Activated CD4-positive, alpha-beta T cell treated with anti-CD3 and anti-CD28 coated beads for 36 hours (primary cell): ENCODE measurements at regions of chr22 and their contacts with region 1.

Region 1: GRCh38 chr22:43993027-43993760 is 30.9 kb upstream of the PARVB start:
- DNase-seq: peak; percentile 74
- ATAC-seq: peak; percentile 74
- H3K4me3 Mint-ChIP-seq: no peak overlapping the region
- H3K27ac Mint-ChIP-seq: no peak overlapping the region
- H3K4me1 Mint-ChIP-seq: peaks cover 29% of the 10 kb centered on the region
- H3K27me3 Mint-ChIP-seq: no peaks in the 10 kb centered on the region

Region 2: DNA sequence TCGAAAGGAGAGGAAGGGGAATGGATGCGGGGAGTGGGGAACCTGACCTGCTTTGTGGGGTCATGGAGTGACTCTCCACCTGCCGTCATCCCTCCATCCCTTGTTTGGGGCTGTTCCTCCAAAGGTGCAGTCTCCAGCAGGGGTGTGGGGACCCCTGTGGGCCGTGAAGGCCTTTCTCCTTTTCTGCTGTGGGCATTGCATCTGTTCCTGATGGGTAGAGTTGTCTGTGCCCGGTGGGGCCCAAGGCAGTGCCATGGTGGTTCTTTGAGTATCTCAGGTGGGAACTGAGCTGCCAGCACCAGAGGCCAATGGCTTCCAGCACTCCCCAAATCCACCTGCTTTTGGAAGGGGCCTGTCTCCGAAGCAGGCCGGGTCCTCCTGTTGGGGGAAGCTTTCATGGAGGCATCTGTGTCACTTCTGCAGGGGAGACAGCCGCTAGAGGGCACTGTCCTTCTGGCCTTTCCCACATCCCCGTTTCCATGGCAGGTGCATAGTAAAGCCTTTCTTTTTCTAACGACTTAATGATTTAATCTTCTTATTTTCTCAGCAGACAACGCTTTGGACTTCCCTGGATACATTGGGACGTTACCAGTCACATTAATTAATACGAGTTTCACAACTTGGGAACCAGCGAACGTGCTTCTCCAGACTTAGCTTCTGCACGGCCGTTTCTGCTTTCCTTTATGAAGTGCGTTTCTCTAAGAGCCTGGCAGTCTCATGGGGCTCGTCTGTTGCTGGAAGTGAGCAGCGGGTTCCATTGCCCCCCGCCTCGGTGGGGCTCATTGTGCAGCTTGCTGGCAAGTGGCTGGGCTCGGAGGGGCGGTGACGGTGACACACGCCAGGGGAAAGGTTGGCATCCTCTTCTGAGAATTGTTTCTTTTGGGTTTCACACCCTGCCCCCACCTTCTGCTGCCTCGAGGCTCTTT is 88.0 kb after region 1 on chr22:
- CTCF ChIA-PET with region 1: interaction called, 56 read pairs
- POLR2A ChIA-PET with region 1: interaction called, 3 read pairs
- intact Hi-C with region 1: loop called (anchors 1 to 5 kb)
- DNase-seq: peak; percentile 85
- ATAC-seq: peak; percentile 68
- H3K4me3 Mint-ChIP-seq: no peak overlapping the region
- H3K27ac Mint-ChIP-seq: no peak overlapping the region
- H3K4me1 Mint-ChIP-seq: no peaks in the 10 kb centered on the region
- H3K27me3 Mint-ChIP-seq: no peaks in the 10 kb centered on the region

Region 3: DNA sequence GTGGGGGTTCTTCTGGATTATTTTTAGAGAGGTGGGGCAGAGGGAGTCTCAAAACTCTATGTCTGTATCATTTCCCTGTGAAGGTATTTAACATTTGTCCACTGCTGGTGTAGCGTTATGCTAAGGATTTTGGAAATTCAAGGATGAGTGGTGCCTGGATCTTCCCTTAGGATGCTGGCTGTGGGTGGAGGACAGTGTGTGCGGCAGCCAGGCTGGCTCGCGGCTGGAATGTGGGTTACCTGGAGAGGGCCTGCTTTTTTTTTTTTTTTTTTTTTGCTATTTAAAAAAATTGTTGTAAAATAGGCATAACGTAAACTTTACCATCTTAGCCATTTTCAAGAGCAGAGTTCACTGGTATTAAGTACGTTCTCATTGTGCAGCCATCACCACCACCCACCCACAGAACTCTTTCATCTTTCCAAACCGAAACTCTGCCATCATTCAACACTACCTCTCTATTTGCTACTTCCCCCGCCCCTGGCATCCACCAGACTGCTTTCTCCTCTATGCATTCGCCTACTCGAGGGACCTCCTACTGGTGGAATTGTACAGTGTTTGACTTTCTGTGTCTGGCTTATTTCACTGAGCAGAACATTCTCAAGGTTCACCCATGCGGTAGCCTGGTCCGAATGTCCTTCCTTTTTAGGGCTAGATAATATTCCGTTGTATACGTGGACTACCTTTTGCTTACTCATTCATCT is 98.0 kb after region 1 on chr22:
- CTCF ChIA-PET with region 1: interaction called, 56 read pairs
- POLR2A ChIA-PET with region 1: interaction called, 3 read pairs
- intact Hi-C with region 1: loop called (anchors 1 to 5 kb)
- DNase-seq: peak; percentile 68
- ATAC-seq: peak; percentile 90
- H3K4me3 Mint-ChIP-seq: no peak overlapping the region
- H3K27ac Mint-ChIP-seq: no peak overlapping the region
- H3K4me1 Mint-ChIP-seq: peaks cover 14% of the 10 kb centered on the region
- H3K27me3 Mint-ChIP-seq: no peaks in the 10 kb centered on the region